Activated B cell treated with CpG ODN at 0.5 μM for 24 hours (primary cell): ENCODE measurements at regions of chr19 and their contacts with region 1.

Region 1: GRCh38 chr19:14432791-14433553 is at the start of gene PKN1:
- DNase-seq: peak; percentile 72
- ATAC-seq: peak; percentile 63
- H3K4me3 Mint-ChIP-seq: peak within 1 kb of the TSS; percentile 87
- H3K27ac Mint-ChIP-seq: peak within 1 kb of the TSS; percentile 76
- H3K4me1 Mint-ChIP-seq: peaks cover 30% of the 10 kb centered on the region
- H3K27me3 Mint-ChIP-seq: no peaks in the 10 kb centered on the region
- CTCF ChIP-seq: no peak
- total RNA-seq, gene PKN1: 139 and 159 TPM in 2 replicates

Region 2: DNA sequence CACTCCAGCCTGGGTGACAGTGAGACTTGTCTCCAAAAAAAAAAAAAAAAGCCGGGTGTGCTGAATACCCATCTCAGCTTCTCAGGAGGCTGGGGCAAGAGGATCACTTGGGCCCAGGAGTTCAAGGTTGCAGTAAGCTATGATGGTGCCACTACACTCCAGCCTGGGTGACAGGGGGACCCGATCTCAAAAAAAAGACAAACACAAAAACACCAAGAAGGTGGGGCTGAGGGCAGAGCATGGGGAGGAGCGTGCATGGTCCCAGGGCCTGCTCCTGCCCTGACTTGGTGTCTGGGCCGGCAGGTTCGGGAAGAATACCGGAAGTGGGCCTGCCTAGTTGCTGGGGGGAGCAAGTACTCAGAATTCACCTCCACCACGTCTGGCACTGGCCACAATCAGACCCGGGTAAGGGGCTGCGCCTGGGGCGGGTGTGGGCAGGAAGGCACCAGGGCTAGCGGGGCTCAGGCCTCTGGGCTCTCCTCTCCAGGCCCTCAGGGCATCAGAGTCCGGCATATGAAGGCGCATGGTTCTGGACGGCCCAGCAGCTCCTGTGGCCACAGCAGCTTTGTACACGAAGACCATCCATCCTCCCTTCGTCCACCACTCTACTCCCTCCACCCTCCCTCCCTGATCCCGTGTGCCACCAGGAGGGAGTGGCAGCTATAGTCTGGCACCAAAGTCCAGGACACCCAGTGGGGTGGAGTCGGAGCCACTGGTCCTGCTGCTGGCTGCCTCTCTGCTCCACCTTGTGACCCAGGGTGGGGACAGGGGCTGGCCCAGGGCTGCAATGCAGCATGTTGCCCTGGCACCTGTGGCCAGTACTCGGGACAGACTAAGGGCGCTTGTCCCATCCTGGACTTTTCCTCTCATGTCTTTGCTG is 25.1 kb before region 1 on chr19:
- CTCF ChIA-PET with region 1: no interaction called
- POLR2A ChIA-PET with region 1: no interaction called
- intact Hi-C with region 1: no loop called
- DNase-seq: no peak
- ATAC-seq: no peak
- H3K4me3 Mint-ChIP-seq: no peak overlapping the region
- H3K27ac Mint-ChIP-seq: no peak overlapping the region
- H3K4me1 Mint-ChIP-seq: peaks cover 34% of the 10 kb centered on the region
- H3K27me3 Mint-ChIP-seq: no peaks in the 10 kb centered on the region
- CTCF ChIP-seq: no peak

Region 3: GRCh38 chr19:14419106-14419813 is 13.7 kb before region 1 on chr19 and contains the start of gene DDX39A:
- CTCF ChIA-PET with region 1: interaction called, 14 read pairs
- POLR2A ChIA-PET with region 1: interaction called, 28 read pairs
- intact Hi-C with region 1: loop called (anchors 1 kb)
- DNase-seq: peak; percentile 83
- ATAC-seq: peak; percentile 91
- H3K4me3 Mint-ChIP-seq: peak within 1 kb of the TSS; percentile 99
- H3K27ac Mint-ChIP-seq: peak within 1 kb of the TSS; percentile 99
- H3K4me1 Mint-ChIP-seq: peaks cover 44% of the 10 kb centered on the region
- H3K27me3 Mint-ChIP-seq: no peaks in the 10 kb centered on the region
- CTCF ChIP-seq: no peak
- total RNA-seq, gene DDX39A: 210 and 211 TPM in 2 replicates